H1 (cell line): ENCODE measurements at regions of chr11 and their contacts with region 1.

Region 1: DNA sequence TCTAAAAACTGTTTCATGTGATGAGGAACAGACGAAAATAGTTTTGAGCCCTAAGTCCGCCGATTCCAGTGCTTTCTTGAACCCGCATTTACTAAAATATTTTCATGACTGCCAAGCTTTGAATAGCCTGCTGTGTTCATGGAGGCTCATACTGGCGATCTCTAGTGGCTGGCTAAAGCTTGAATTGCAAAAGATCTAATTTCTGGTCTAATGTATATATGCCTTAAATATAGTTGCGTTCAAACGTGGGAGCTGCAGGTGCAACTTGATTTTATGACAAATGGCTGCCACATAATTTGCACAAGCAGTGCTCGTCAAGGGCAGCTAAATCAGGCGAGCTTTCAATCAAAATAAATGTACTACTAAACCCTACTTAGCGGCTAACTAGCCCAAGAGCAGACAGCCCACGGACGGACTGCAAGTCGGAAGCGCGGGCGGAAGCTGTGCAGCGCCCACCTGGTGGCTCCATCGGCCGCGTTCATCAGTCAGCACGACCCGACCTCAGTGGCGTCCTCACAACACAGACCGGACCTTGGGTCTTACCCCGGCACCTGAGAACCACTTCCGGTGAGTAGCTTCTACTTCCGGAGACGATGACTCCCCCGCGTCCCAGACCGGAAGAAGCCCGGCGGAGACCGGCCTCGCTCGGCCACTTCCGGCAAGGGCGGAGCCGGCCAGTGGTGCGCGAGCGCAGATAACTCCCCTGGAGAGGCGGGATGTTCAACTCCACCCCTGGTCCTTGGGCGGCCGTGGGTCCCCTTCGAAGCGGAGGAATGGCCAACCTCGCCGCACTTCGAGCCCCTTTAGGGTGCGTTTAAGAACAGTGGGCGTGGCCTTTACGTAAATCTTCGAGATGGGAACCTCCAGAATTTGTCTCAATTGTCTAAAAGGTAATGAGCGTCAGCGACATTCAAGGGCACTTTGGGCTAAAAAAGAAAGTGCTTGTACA is 6.1 kb downstream of the RPL27A start:
- DNase-seq: peak; percentile 92 to 98
- H3K4me3 ChIP-seq: peak overlapping the region; percentile 39 to 68 (median 49)
- H3K27ac ChIP-seq: peak overlapping the region; percentile 78
- H3K4me1 ChIP-seq: peaks cover 0 to 15% (median 8%) of the 10 kb centered on the region in 4 experiments; a peak in 4 of 7 replicates
- H3K27me3 ChIP-seq: no peaks in the 10 kb centered on the region
- CTCF ChIP-seq: peak; percentile 10 to 17 (median 13); a peak in 2 of 4 replicates
- EP300 ChIP-seq: no peak
- POLR2A ChIP-seq: peak; percentile 96
- RAD21 ChIP-seq: peak; percentile 41 to 50

Region 2: DNA sequence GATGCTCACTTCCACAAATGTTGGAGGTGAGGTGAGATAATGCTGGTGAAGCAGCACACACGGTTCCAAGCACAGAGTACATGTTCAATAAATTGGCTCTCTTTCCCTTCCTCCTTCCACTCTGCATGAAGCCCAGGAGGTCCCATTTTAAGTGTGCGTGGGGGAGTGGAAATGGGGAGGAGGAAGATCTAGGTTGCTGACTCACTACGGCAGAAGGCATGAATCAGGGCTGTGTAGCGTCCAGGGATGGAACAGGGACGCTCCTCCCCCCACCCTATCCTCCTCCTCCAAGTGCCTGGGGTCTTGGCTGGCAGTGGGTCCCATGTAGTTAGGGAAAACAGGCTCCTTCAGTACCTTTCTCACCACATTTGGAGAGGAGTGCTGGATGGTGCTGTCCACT is 50.4 kb before region 1 on chr11:
- CTCF ChIA-PET with region 1: no interaction called
- POLR2A ChIA-PET with region 1: interaction called, 41 read pairs
- DNase-seq: no peak
- H3K4me3 ChIP-seq: no peak overlapping the region
- H3K27ac ChIP-seq: no peak overlapping the region
- H3K4me1 ChIP-seq: peaks cover 4 to 9% (median 9%) of the 10 kb centered on the region in 4 experiments; a peak in 6 of 7 replicates
- H3K27me3 ChIP-seq: no peaks in the 10 kb centered on the region
- CTCF ChIP-seq: no peak
- EP300 ChIP-seq: no peak
- POLR2A ChIP-seq: no peak
- RAD21 ChIP-seq: no peak

Region 3: GRCh38 chr11:8671193-8671612 is 17.5 kb before region 1 on chr11:
- CTCF ChIA-PET with region 1: interaction called, 3 read pairs
- POLR2A ChIA-PET with region 1: interaction called, 103 read pairs
- DNase-seq: peak; percentile 61 to 77
- H3K4me3 ChIP-seq: peak overlapping the region in 1 of 4 experiments; percentile 37; a peak in 2 of 8 replicates
- H3K27ac ChIP-seq: peak overlapping the region; percentile 90
- H3K4me1 ChIP-seq: peaks cover 10 to 15% (median 12%) of the 10 kb centered on the region in 4 experiments; a peak in 6 of 7 replicates
- H3K27me3 ChIP-seq: no peaks in the 10 kb centered on the region
- CTCF ChIP-seq: no peak
- EP300 ChIP-seq: 0 out of 3 replicates have a peak, but pooled peaks of 1 of the 2 experiments have one; percentile 64
- POLR2A ChIP-seq: peak; percentile 53 to 88
- RAD21 ChIP-seq: no peak

Region 4: GRCh38 chr11:8709002-8709672 is 20.4 kb after region 1 on chr11:
- CTCF ChIA-PET with region 1: no interaction called
- POLR2A ChIA-PET with region 1: interaction called, 248 read pairs
- DNase-seq: no peak
- H3K4me3 ChIP-seq: no peak overlapping the region
- H3K27ac ChIP-seq: peak overlapping the region; percentile 75; the same call in 1 of the 2 replicates
- H3K4me1 ChIP-seq: peaks cover 0 to 7% (median 6%) of the 10 kb centered on the region in 4 experiments; a peak in 4 of 7 replicates
- H3K27me3 ChIP-seq: no peaks in the 10 kb centered on the region
- CTCF ChIP-seq: no peak
- EP300 ChIP-seq: peak in 1 of 2 experiments; percentile 13; a peak in 1 of 3 replicates
- POLR2A ChIP-seq: peak in 1 of 2 experiments; percentile 61; a peak in 1 of 3 replicates
- RAD21 ChIP-seq: peak in 1 of 2 experiments; percentile 8; a peak in 1 of 4 replicates

Region 5: DNA sequence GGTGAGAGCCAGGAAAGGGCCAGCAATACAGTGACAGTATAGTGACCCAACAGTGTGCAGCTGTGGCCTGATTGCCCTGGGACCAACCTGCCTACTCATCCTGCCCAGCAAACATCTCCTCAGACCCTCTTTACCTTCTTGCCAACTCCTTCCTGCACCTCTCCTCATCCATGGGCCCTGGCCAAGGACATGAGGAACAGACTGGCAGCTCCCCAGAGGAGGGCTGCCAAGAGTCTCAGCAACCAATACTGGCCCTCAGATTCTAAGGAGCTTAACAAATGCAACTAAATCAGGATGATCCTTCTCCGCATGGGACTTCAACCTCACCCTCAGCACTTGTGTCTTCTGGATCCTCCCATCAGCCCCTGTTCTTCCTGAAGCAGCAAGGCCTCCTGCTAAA is 70.9 kb after region 1 on chr11:
- CTCF ChIA-PET with region 1: interaction called, 3 read pairs
- POLR2A ChIA-PET with region 1: interaction called, 12 read pairs
- DNase-seq: no peak
- H3K4me3 ChIP-seq: no peak overlapping the region
- H3K27ac ChIP-seq: no peak overlapping the region
- H3K4me1 ChIP-seq: peaks cover 0 to 10% (median 0%) of the 10 kb centered on the region in 4 experiments; a peak in 1 of 7 replicates
- H3K27me3 ChIP-seq: no peaks in the 10 kb centered on the region
- CTCF ChIP-seq: no peak
- EP300 ChIP-seq: no peak
- POLR2A ChIP-seq: no peak
- RAD21 ChIP-seq: no peak

Region 6: GRCh38 chr11:8870411-8871170 is 181.9 kb after region 1 on chr11:
- CTCF ChIA-PET with region 1: no interaction called
- POLR2A ChIA-PET with region 1: interaction called, 13 read pairs
- DNase-seq: peak; percentile 34 to 83
- H3K4me3 ChIP-seq: peak overlapping the region; percentile 57 to 86 (median 69)
- H3K27ac ChIP-seq: 0 out of 2 replicates have a peak overlapping the region, but pooled peaks have one; percentile 48
- H3K4me1 ChIP-seq: peaks cover 0 to 7% (median 0%) of the 10 kb centered on the region in 4 experiments; a peak in 3 of 7 replicates
- H3K27me3 ChIP-seq: no peaks in the 10 kb centered on the region
- CTCF ChIP-seq: peak in 2 of 3 experiments; percentile 10; a peak in 2 of 4 replicates
- EP300 ChIP-seq: no peak
- POLR2A ChIP-seq: no peak; a peak in 1 of 3 replicates
- RAD21 ChIP-seq: peak; percentile 19 to 41; a peak in 3 of 4 replicates